ENCODE measurements at regions of chr21 and their contacts with region 1.

Region 1: GRCh38 chr21:29849735-29850176 is 90.0 kb downstream of the GRIK1 start:
- DNase-seq: peak; percentile 64
- ATAC-seq: peak; percentile 95
- H3K4me3 Mint-ChIP-seq: no peak overlapping the region
- H3K27ac Mint-ChIP-seq: no peak overlapping the region
- H3K4me1 Mint-ChIP-seq: no peaks in the 10 kb centered on the region
- H3K27me3 Mint-ChIP-seq: peaks cover 14% of the 10 kb centered on the region

Region 2: GRCh38 chr21:29360799-29361765 is 488.7 kb before region 1 on chr21:
- CTCF ChIA-PET with region 1: interaction called, 7 read pairs
- POLR2A ChIA-PET with region 1: no interaction called
- intact Hi-C with region 1: loop called in 1 of 2 experiments (anchors 1 kb)
- DNase-seq: peak; percentile 28
- ATAC-seq: no peak
- H3K4me3 Mint-ChIP-seq: no peak overlapping the region
- H3K27ac Mint-ChIP-seq: no peak overlapping the region
- H3K4me1 Mint-ChIP-seq: peaks cover 14% of the 10 kb centered on the region
- H3K27me3 Mint-ChIP-seq: no peaks in the 10 kb centered on the region

Region 3: DNA sequence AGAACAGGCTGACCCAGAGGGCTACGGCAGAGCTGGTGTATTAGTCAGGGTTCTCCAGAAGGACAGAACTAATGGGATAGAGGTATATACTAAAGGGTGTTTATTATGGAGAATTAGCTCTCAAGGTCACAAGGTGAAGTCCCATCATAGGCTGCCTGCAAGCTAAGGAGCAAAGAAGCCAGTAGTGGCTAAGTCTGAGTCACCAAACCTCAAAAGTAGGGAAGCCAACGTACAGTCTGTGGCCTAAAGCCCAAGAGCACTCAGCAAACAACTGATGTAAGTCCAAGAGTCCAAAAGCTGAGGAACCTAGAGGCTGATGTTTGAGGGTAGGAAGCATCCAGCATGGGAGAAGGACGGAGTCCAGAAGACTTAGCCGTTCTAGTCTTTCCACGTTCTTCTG is 371.8 kb before region 1 on chr21:
- CTCF ChIA-PET with region 1: interaction called, 8 read pairs
- POLR2A ChIA-PET with region 1: no interaction called
- intact Hi-C with region 1: loop called (anchors 1 kb)
- DNase-seq: no peak
- ATAC-seq: no peak
- H3K4me3 Mint-ChIP-seq: no peak overlapping the region
- H3K27ac Mint-ChIP-seq: no peak overlapping the region
- H3K4me1 Mint-ChIP-seq: peaks cover 18% of the 10 kb centered on the region
- H3K27me3 Mint-ChIP-seq: no peaks in the 10 kb centered on the region

Region 4: DNA sequence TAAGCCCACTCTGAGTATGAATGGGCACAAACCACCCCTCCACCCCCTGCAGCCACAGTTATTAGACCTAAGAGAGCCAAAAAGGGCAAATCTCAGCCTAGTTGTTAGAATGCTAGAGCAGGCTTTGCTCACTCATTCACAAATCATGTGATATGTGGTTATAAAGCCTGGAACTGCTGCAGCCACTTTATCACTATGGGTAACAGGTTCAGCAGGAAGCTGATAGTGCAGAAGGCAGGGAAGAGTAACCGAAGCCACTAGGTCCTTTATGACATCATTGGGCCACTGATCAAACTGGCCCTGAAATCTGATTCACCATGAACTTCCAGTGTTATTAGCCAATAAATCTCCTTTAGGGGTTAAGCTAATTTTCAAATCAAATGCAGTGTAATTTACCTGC is 44.7 kb before region 1 on chr21:
- CTCF ChIA-PET with region 1: no interaction called
- POLR2A ChIA-PET with region 1: no interaction called
- intact Hi-C with region 1: no loop called
- DNase-seq: no peak
- ATAC-seq: no peak
- H3K4me3 Mint-ChIP-seq: no peak overlapping the region
- H3K27ac Mint-ChIP-seq: no peak overlapping the region
- H3K4me1 Mint-ChIP-seq: no peaks in the 10 kb centered on the region
- H3K27me3 Mint-ChIP-seq: peaks cover 6% of the 10 kb centered on the region